ENCODE measurements at regions of chr6 and their contacts with region 1.

Region 1: GRCh38 chr6:43762966-43763695 is 6.9 kb upstream of the VEGFA start:
- DNase-seq: no peak
- H3K4me3 ChIP-seq: no peak overlapping the region
- H3K4me3 Mint-ChIP-seq: no peak overlapping the region
- H3K27ac ChIP-seq: no peak overlapping the region
- H3K27ac Mint-ChIP-seq: no peak overlapping the region
- H3K4me1 ChIP-seq: no peaks in the 10 kb centered on the region
- H3K4me1 Mint-ChIP-seq: no peaks in the 10 kb centered on the region
- H3K27me3 ChIP-seq: no peaks in the 10 kb centered on the region
- H3K27me3 Mint-ChIP-seq: peaks cover 8 to 16% of the 10 kb centered on the region in 2 donors

Region 2: DNA sequence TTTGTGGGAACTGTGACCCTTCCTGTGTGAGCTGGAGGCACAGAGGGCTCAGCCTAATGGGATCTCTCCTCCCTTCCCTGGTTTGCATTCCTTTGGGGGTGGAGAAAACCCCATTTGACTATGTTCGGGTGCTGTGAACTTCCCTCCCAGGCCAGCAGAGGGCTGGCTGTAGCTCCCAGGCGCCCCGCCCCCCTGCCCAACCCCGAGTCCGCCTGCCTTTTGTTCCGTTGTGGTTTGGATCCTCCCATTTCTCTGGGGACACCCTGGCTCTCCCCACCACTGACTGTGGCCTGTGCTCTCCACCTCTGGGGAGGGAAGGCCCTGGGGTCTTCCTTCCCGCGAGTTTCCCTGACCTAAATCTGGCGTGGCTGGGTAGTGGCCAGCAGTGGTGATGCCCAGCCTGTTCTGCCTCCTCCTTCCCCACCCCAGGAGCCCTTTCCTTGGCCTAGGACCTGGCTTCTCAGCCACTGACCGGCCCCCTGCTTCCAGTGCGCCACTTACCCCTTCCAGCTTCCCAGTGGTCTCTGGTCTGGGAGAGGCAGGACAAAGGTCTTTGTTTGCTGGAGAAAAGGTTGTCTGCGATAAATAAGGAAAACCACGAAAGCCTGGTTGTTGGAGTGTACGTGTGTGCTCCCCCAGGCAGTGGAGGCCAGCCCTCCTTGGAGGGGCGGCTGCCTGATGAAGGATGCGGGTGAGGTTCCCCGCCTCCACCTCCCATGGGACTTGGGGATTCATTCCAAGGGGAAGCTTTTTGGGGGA is 11.8 kb after region 1 on chr6:
- CTCF ChIA-PET with region 1: interaction called, 14 read pairs
- POLR2A ChIA-PET with region 1: no interaction called
- DNase-seq: peak; percentile 24 to 61 (median 48)
- H3K4me3 ChIP-seq: no peak overlapping the region
- H3K4me3 Mint-ChIP-seq: no peak overlapping the region
- H3K27ac ChIP-seq: peak overlapping the region; percentile 92
- H3K27ac Mint-ChIP-seq: no peak overlapping the region
- H3K4me1 ChIP-seq: peaks cover 9% of the 10 kb centered on the region
- H3K4me1 Mint-ChIP-seq: peaks cover 10 to 28% (median 12%) of the 10 kb centered on the region in 3 donors
- H3K27me3 ChIP-seq: peaks cover 25% of the 10 kb centered on the region
- H3K27me3 Mint-ChIP-seq: peaks cover 16 to 28% of the 10 kb centered on the region in 2 donors

Region 3: GRCh38 chr6:43823879-43824702 is 61.0 kb after region 1 on chr6:
- CTCF ChIA-PET with region 1: no interaction called
- POLR2A ChIA-PET with region 1: no interaction called
- DNase-seq: peak in 1 of 5 donors; percentile 5
- H3K4me3 ChIP-seq: no peak overlapping the region
- H3K4me3 Mint-ChIP-seq: peak overlapping the region in 1 of 7 donors; percentile 19
- H3K27ac ChIP-seq: no peak overlapping the region
- H3K27ac Mint-ChIP-seq: peak overlapping the region in 3 of 8 donors; percentile 13 to 61 (median 26)
- H3K4me1 ChIP-seq: no peaks in the 10 kb centered on the region
- H3K4me1 Mint-ChIP-seq: peaks cover 0 to 6% (median 0%) of the 10 kb centered on the region in 3 donors
- H3K27me3 ChIP-seq: peaks cover 4% of the 10 kb centered on the region
- H3K27me3 Mint-ChIP-seq: peaks cover 5 to 22% of the 10 kb centered on the region in 2 donors